Natural killer cell (primary cell): ENCODE measurements at regions of chr3 and their contacts with region 1.

Region 1: DNA sequence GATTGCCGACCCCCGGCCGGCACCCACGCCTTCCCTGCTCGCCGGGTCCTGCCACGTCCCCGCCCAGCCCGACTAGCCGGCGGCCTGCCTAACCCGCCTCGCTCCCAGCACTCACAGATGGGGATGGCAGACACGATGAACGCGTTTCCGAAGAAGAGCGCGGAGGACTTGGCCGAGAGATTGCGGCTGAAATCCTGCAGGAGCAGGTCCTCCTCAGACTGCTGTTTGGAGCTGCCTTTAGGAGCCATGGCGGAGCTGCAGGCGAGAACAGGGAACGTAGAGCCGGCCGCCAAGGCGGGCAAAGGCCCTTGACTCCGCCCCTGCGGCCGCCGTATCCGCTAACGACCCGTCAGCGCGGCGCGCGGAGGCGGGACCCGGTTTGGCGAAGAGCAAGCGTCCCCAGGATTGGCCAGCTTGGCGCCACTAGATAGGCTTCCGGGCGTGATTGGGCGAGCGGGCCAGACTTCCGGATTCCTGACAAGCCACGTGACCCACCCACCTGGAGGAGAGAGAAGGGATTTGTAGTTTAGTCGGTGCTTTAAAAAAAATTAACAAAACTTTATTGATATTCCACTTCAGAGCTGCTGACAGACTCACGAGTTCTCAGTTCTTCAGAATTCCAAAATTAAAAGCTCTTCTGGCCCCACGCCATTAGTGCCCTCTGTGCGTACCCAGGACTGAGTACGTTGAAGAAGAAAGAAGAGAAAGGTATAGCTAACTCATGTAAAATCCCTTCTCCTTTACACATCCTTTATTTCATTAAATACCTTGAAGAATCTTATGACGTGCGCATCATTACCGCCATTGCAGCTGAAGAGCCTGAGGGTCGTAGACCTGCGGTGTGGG is at the start of gene SSR3:
- DNase-seq: peak; percentile 98 to 99
- ATAC-seq: peak; percentile 98 to 100 (median 98)
- H3K4me3 ChIP-seq: peak within 1 kb of the TSS; percentile 78
- H3K4me3 Mint-ChIP-seq: peak within 1 kb of the TSS; percentile 93
- H3K27ac ChIP-seq: peak within 1 kb of the TSS; percentile 63
- H3K27ac Mint-ChIP-seq: peak within 1 kb of the TSS; percentile 90 to 93
- H3K4me1 ChIP-seq: peaks cover 8% of the 10 kb centered on the region
- H3K4me1 Mint-ChIP-seq: peaks cover 42 to 48% of the 10 kb centered on the region in 2 donors
- H3K27me3 ChIP-seq: no peaks in the 10 kb centered on the region
- H3K27me3 Mint-ChIP-seq: no peaks in the 10 kb centered on the region
- CTCF ChIP-seq: no peak
- total RNA-seq, gene SSR3: 60.7 to 75.1 (median 63.0) TPM

Region 2: DNA sequence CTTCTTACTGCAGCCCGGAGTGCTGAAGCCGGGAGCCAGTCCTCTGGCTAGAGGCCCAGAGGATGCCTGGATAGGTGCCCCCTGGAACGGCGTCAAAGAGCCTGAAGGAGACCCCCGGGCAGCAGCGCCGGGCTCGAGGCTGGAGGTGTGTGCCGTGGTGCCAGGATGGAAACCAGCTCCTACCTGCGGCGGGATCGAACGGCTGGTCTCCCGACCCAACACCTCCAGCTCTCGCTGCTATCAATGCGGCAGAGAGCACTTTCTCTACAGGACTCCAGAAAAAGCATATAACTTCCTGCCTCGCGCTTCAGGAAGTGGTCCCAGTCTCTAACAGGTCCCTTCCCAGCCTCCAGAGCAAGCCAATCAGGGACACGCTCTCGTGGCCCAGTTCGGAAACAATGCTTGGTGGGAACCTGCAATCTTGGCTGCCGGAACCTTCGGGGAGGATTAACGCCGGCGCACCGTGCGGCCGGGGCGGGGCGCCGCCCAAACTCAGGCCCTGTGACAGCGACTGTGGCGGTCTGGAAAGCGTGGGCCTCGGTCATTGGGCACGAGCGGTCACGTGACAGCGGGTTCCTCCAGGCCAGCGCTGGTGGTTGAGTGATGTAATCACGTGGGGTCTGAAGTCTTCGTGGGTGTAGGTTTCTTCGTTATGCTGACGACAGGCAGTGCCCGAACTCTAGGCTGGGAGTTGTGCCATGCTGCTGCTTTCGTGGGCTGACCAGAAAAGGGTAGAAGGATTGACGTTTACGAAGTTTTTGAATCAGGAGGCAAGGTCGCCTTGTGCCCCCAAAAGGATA is 700.7 kb before region 1 on chr3 and contains the start of gene SLC33A1:
- intact Hi-C with region 1: loop called (anchors 10 kb)
- DNase-seq: peak; percentile 99 to 100
- ATAC-seq: peak; percentile 87 to 98 (median 88)
- H3K4me3 ChIP-seq: peak within 1 kb of the TSS; percentile 87
- H3K4me3 Mint-ChIP-seq: peak within 1 kb of the TSS; percentile 88
- H3K27ac ChIP-seq: peak within 1 kb of the TSS; percentile 97
- H3K27ac Mint-ChIP-seq: peak within 1 kb of the TSS; percentile 98
- H3K4me1 ChIP-seq: peaks cover 36% of the 10 kb centered on the region
- H3K4me1 Mint-ChIP-seq: peaks cover 42 to 46% of the 10 kb centered on the region in 2 donors
- H3K27me3 ChIP-seq: no peaks in the 10 kb centered on the region
- H3K27me3 Mint-ChIP-seq: no peaks in the 10 kb centered on the region
- CTCF ChIP-seq: no peak
- total RNA-seq, gene SLC33A1: 25.2 to 28.4 (median 27.2) TPM

Region 3: GRCh38 chr3:156483961-156484787 is 70.9 kb before region 1 on chr3:
- intact Hi-C with region 1: loop called (anchors 1 kb)
- DNase-seq: peak; percentile 33 to 77
- ATAC-seq: peak; percentile 74 to 88 (median 88)
- H3K4me3 ChIP-seq: peak overlapping the region; percentile 19
- H3K4me3 Mint-ChIP-seq: peak overlapping the region; percentile 74
- H3K27ac ChIP-seq: peak overlapping the region; percentile 92
- H3K27ac Mint-ChIP-seq: peak overlapping the region; percentile 77 to 80
- H3K4me1 ChIP-seq: peaks cover 10% of the 10 kb centered on the region
- H3K4me1 Mint-ChIP-seq: peaks cover 27 to 31% of the 10 kb centered on the region in 2 donors
- H3K27me3 ChIP-seq: no peaks in the 10 kb centered on the region
- H3K27me3 Mint-ChIP-seq: peaks cover under 1 to 2% of the 10 kb centered on the region in 2 donors
- CTCF ChIP-seq: no peak

Region 4: GRCh38 chr3:157081681-157082210 is 526.7 kb after region 1 on chr3:
- intact Hi-C with region 1: loop called (anchors 1 kb)
- DNase-seq: peak; percentile 80 to 90
- ATAC-seq: peak; percentile 90 to 99 (median 98)
- H3K4me3 ChIP-seq: no peak overlapping the region
- H3K4me3 Mint-ChIP-seq: no peak overlapping the region
- H3K27ac ChIP-seq: peak overlapping the region; percentile 48
- H3K27ac Mint-ChIP-seq: peak overlapping the region in 1 of 2 donors; percentile 65
- H3K4me1 ChIP-seq: peaks cover 10% of the 10 kb centered on the region
- H3K4me1 Mint-ChIP-seq: peaks cover 0 to 7% of the 10 kb centered on the region in 2 donors
- H3K27me3 ChIP-seq: no peaks in the 10 kb centered on the region
- H3K27me3 Mint-ChIP-seq: peaks cover 11 to 17% of the 10 kb centered on the region in 2 donors
- CTCF ChIP-seq: peak; percentile 98

Region 5: DNA sequence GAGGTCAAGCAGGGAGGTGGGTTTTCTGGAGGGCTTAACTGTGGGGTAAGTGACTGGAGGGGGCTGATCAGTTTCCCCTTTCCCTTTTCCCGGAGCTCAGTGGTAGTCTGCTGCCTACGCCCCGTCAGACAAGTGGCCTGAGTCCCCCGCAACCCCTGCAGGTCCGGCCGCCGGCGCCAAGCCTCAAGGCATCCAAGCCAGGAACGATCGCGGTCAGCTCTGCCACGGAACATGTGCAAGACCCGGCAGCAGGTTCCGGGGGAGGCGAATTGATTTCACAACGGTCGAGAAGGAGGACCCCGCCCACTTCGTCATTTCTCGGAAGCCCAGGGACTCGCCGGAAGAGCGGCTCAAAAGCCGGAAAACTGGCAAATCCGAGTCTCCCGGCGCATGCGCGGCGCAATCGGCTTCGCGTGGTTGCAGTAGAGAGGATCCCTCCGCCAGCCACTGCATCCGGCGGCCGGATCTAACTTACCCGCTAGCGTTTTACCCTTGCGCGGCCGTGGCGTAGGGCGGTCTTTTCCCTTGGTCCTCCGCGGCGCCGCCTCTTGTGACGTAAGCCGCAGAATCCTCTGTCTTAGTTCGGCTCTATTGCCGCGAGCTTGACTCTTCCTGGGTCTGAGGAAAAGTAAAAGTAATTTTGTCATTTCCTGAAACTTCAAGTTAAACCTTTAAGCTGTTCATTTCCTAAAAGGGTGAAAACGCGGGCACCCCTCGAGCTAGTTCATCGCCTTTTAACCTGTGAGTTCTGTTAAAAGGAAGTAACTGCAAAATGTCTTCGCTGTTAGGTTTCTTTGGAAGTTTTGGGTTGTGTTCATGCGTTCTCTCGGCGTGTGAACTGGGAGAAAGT is 619.8 kb after region 1 on chr3:
- intact Hi-C with region 1: loop called (anchors 1 kb)
- DNase-seq: peak; percentile 94 to 100
- ATAC-seq: peak; percentile 93 to 98 (median 93)
- H3K4me3 ChIP-seq: peak overlapping the region; percentile 64
- H3K4me3 Mint-ChIP-seq: peak overlapping the region; percentile 94
- H3K27ac ChIP-seq: peak overlapping the region; percentile 93
- H3K27ac Mint-ChIP-seq: peak overlapping the region; percentile 94 to 100
- H3K4me1 ChIP-seq: peaks cover 14% of the 10 kb centered on the region
- H3K4me1 Mint-ChIP-seq: peaks cover 21% of the 10 kb centered on the region in 2 donors
- H3K27me3 ChIP-seq: no peaks in the 10 kb centered on the region
- H3K27me3 Mint-ChIP-seq: peaks cover 9 to 10% of the 10 kb centered on the region in 2 donors
- CTCF ChIP-seq: no peak